Left lung (tissue), 14 donors: ENCODE measurements at regions of chr3 and their contacts with region 1.

Region 1: DNA sequence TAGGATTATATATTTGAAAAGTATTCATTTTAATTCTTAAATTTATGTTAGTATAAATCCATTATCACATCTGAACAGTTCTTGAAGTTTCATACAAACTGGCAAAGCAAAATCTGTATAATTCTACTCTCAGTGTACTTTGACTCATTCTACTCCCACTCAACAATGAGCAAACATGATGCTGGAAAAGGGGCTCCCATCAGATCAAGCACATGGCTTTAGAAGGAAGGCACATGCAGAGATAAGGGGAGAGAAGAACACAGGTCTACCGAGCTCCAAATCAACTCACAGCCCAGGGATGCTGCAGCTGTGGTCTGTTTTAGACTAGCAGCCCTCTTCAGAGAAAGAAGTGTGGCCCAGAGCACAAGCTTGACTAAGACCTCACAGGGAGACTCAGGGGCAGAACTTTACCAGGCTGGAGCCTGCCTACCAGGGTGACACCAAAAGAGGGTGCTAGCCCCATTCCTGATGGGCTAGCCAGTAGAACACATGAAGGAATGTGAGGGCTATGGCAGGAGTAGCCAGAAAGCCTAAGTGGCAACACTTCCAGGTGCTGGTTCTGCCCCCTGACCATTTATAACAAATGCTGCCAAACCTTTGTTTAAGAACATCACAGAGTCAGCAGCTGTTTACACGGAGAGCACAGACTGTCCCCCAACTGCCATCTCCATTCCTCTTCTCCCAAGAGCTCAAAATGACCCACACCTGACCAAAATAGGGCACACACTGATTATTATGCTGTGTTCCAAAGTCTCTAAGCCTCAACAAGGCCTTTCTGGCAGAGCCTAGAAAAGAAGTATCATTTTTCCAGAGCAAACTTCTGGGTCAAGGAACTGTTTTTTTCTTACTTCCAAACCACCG is 19.5 kb downstream of the SEC22C start:
- DNase-seq: no peak
- ATAC-seq: no peak
- H3K4me3 ChIP-seq: no peak overlapping the region
- H3K27ac ChIP-seq: no peak overlapping the region
- H3K4me1 ChIP-seq: no peaks in the 10 kb centered on the region
- H3K27me3 ChIP-seq: no peaks in the 10 kb centered on the region
- CTCF ChIP-seq: no peak

Region 2: DNA sequence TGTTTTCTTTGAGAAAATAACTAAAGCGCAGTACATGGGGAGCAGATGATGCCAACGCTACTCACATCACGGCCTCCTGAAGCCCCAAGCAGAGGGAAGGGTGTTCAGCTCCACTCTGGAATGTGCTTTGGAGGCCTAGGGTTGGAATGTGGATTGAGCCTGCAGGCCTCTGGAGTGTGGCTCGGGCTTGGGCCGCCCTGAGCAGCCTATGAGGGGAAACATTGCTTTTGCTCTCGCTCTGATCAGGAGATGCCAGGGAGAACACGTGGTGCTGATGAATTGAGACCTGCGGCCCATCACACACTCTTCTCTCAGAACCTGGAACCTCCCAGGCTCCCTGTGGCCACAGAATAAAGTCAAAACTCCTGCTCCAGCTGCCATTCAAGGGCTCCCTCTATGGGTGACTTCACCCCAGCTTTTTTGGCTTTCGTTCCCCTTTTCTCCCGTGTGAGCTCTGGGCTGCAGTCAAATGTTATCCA is 187.5 kb after region 1 on chr3:
- intact Hi-C with region 1: loop called in 1 of 2 experiments (anchors 10 kb)
- DNase-seq: peak in 1 of 4 donors; percentile 31
- ATAC-seq: no peak
- H3K4me3 ChIP-seq: no peak overlapping the region
- H3K27ac ChIP-seq: no peak overlapping the region
- H3K4me1 ChIP-seq: peaks cover 0 to 14% of the 10 kb centered on the region in 2 donors
- H3K27me3 ChIP-seq: no peaks in the 10 kb centered on the region
- CTCF ChIP-seq: peak in 1 of 2 donors; percentile 15